ENCODE measurements at regions of chr7 and their contacts with region 1.

Region 1: GRCh38 chr7:774161-775109 is 47.4 kb upstream of the PRKAR1B start:
- DNase-seq: peak; percentile 72 to 84
- H3K4me3 ChIP-seq: no peak overlapping the region
- H3K27ac ChIP-seq: peak overlapping the region in 1 of 5 donors; percentile 90
- H3K4me1 ChIP-seq: peaks cover 22 to 46% (median 31%) of the 10 kb centered on the region in 4 donors
- H3K27me3 ChIP-seq: no peaks in the 10 kb centered on the region
- CTCF ChIP-seq: peak in 5 of 7 experiments; percentile 85 to 93 (median 92)
- EP300 ChIP-seq: no peak
- POLR2A ChIP-seq: no peak

Region 2: GRCh38 chr7:322111-322671 is 452.2 kb before region 1 on chr7:
- intact Hi-C with region 1: loop called (anchors 10 kb)
- DNase-seq: peak; percentile 91 to 94
- H3K4me3 ChIP-seq: peak overlapping the region in 1 of 4 donors; percentile 23
- H3K27ac ChIP-seq: peak overlapping the region; percentile 81 to 87 (median 83)
- H3K4me1 ChIP-seq: peaks cover 32 to 48% (median 44%) of the 10 kb centered on the region in 4 donors
- H3K27me3 ChIP-seq: peaks cover 0 to 30% (median 0%) of the 10 kb centered on the region in 3 donors
- CTCF ChIP-seq: peak in 6 of 7 experiments; percentile 57 to 100 (median 95)
- EP300 ChIP-seq: no peak
- POLR2A ChIP-seq: no peak